SK-N-SH (cell line): ENCODE measurements at regions of chr17 and their contacts with region 1.

Region 1: GRCh38 chr17:48457080-48457836 is 27.2 kb upstream of the SKAP1 start:
- DNase-seq: peak; percentile 72
- H3K4me3 ChIP-seq: peak overlapping the region in 1 of 2 experiments; percentile 36; a peak in 1 of 4 replicates
- H3K27ac ChIP-seq: no peak overlapping the region
- H3K4me1 ChIP-seq: no peaks in the 10 kb centered on the region; a peak in 1 of 4 replicates
- H3K27me3 ChIP-seq: peaks cover 70% of the 10 kb centered on the region
- CTCF ChIP-seq: peak; percentile 99
- EP300 ChIP-seq: no peak
- RAD21 ChIP-seq: peak; percentile 56

Region 2: GRCh38 chr17:48441231-48441711 is 16.0 kb before region 1 on chr17:
- CTCF ChIA-PET with region 1: interaction called, 31 read pairs
- POLR2A ChIA-PET with region 1: no interaction called
- DNase-seq: no peak
- H3K4me3 ChIP-seq: no peak overlapping the region
- H3K27ac ChIP-seq: no peak overlapping the region
- H3K4me1 ChIP-seq: no peaks in the 10 kb centered on the region; a peak in 1 of 4 replicates
- H3K27me3 ChIP-seq: peaks cover 93% of the 10 kb centered on the region
- CTCF ChIP-seq: no peak
- EP300 ChIP-seq: no peak
- RAD21 ChIP-seq: no peak

Region 3: DNA sequence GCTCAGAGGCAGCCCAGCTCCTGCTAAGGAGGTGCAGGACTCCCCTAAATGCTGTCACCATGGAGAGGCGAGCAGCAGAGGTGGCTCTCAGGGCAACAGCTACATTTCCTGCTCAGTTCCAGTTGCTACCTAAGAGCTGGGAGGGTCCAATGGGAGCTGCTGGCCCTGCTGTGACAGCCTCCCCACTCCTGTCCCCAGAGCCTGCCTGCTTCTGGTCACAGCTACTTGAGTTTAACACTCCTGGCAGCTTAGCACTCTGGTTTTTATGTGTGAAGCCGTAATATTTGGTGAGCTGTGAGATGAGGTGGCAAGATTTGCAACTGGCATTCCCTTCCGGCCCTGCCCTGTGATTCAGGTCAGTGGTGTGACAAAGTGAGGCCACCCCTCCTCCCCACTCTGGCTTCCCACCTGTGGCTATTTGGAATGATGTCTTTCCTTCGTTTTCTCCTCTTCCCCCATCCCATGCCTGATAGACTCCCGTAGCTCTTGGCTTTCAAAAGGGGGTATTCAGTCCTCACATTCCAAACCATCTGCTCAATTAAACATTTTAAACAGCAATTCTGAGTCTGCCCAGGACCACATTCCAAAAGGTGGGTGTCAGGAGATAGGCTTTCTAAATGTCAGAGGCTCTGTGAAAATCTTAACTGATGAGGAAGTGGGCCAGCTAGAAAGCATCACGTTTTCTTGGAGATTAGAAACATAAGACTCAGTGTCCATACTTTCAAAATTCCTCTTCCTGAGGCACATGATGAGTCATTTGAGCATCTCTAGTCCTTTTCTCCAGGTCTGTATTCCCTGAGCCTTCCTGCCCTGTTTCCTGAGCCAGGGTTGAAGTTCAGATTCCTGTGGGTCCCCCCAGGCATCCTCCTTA is 15.4 kb after region 1 on chr17:
- CTCF ChIA-PET with region 1: interaction called, 19 read pairs
- POLR2A ChIA-PET with region 1: interaction called, 3 read pairs
- DNase-seq: no peak
- H3K4me3 ChIP-seq: no peak overlapping the region
- H3K27ac ChIP-seq: peak overlapping the region in 1 of 2 experiments; percentile 37; a peak in 2 of 4 replicates
- H3K4me1 ChIP-seq: 0 out of 4 replicates have a peak, but pooled peaks cover 0 to 7% of the 10 kb centered on the region in 2 experiments
- H3K27me3 ChIP-seq: peaks cover 24% of the 10 kb centered on the region; the same call in 1 of the 2 replicates
- CTCF ChIP-seq: no peak
- EP300 ChIP-seq: peak in 1 of 2 experiments; percentile 71; a peak in 2 of 4 replicates
- RAD21 ChIP-seq: no peak

Region 4: GRCh38 chr17:48478224-48479013 is 21.2 kb after region 1 on chr17:
- CTCF ChIA-PET with region 1: interaction called, 19 read pairs
- POLR2A ChIA-PET with region 1: no interaction called
- DNase-seq: no peak
- H3K4me3 ChIP-seq: no peak overlapping the region
- H3K27ac ChIP-seq: no peak overlapping the region
- H3K4me1 ChIP-seq: 0 out of 4 replicates have a peak, but pooled peaks cover 0 to 10% of the 10 kb centered on the region in 2 experiments
- H3K27me3 ChIP-seq: no peaks in the 10 kb centered on the region
- CTCF ChIP-seq: no peak
- EP300 ChIP-seq: no peak
- RAD21 ChIP-seq: no peak